ENCODE measurements at regions of chr7 and their contacts with region 1.

Region 1: DNA sequence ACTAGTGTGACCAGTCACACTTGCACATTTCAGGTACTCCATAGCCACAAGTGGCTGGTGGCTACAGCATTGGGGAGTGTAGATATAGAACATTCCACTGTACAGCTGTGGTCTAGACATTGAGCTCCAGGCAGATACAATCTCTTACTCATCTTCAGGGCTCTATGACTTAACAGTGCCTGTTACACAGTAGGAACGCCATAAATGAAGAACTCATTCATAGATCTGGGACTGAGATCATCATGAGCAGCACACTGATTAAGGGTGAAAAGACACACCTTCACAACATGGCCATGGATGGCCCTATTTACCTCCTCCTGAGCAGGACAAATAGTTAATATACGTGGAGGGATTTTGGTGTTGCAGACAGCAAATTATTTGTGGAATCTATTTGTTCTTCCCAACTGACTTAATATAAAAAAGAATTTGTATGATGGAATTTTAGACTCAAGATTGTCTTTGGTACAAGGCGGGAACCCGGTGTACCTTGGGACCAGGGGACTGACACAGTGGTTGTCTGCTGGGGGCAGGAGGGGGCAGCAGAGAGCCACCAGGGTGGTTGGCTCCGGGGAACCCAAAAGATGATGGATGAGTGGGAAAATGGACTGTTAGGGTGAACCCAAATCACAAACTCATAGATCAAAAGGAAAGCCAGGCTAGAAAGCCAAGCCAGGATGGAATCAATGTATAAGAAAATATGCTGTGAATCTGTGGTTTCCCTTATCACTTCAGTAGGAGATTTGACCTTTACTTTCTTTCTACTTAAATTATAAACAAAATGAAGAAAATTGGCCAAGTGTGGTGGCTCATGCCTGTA is 24.3 kb upstream of the CPA2 start:
- DNase-seq: peak; percentile 60
- ATAC-seq: peak; percentile 95
- H3K4me3 ChIP-seq: no peak overlapping the region
- H3K27ac ChIP-seq: no peak overlapping the region
- H3K4me1 ChIP-seq: peaks cover 10% of the 10 kb centered on the region; the same call in 1 of the 2 replicates
- H3K27me3 ChIP-seq: no peaks in the 10 kb centered on the region
- CTCF ChIP-seq: peak; percentile 93

Region 2: DNA sequence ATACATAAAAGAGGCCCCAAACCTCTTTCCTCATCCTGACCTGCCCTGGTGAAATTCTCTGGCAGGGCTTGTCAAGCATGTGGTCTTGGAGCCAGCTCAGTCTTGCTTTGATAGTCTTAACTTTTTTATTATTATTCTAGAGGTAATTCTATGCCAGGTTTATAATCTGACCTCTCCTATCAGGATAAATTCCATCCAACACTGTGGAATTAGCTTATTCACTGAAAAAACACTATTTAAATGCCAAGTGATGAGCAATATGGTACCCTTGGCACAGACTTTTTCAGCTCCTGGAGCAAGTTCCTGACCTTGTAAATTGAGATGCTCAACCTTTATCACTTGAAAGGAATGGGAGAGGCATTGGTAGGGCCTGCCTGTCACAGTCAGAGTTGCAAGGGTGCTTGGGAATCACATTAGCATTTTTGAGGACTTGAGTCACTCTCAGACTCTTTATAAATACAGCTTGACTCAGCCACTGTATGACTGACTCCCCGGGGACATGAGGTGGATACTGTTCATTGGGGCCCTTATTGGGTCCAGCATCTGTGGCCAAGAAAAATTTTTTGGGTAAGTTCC is 50.4 kb after region 1 on chr7 and contains the start of gene CPA4:
- CTCF ChIA-PET with region 1: no interaction called
- POLR2A ChIA-PET with region 1: no interaction called
- intact Hi-C with region 1: loop called (anchors 5 kb)
- DNase-seq: peak; percentile 97
- ATAC-seq: peak; percentile 97
- H3K4me3 ChIP-seq: peak within 1 kb of the TSS; percentile 38
- H3K27ac ChIP-seq: peak within 1 kb of the TSS; percentile 66
- H3K4me1 ChIP-seq: peaks cover 44% of the 10 kb centered on the region
- H3K27me3 ChIP-seq: no peaks in the 10 kb centered on the region
- CTCF ChIP-seq: no peak
- total RNA-seq, gene CPA4: 10.1 and 22.1 TPM in 2 replicates

Region 3: GRCh38 chr7:130421684-130422083 is 179.3 kb after region 1 on chr7:
- CTCF ChIA-PET with region 1: no interaction called
- POLR2A ChIA-PET with region 1: no interaction called
- intact Hi-C with region 1: loop called (anchors 10 kb)
- DNase-seq: no peak
- ATAC-seq: peak; percentile 42
- H3K4me3 ChIP-seq: no peak overlapping the region
- H3K27ac ChIP-seq: peak overlapping the region; percentile 63
- H3K4me1 ChIP-seq: peaks cover 33% of the 10 kb centered on the region
- H3K27me3 ChIP-seq: no peaks in the 10 kb centered on the region
- CTCF ChIP-seq: no peak

Region 4: DNA sequence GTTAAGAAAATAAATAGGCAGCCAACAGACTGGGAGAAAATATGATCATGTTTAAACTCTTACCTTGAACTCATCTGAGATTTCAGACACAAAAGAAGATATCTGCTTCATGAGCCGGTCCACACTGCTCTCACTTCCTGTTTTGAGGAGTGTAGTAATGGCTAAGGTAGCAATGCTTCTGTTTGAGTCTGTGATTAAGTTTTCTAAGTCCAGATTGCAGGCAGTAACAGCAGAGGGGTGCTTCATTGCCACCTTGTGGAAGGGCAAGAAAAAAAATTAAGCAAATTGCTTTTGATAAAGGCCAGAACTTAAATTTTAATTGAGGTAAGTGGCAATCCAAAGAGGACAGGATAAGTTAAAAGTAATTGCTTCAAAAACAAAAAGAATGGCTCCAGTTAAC is 318.6 kb after region 1 on chr7:
- CTCF ChIA-PET with region 1: no interaction called
- POLR2A ChIA-PET with region 1: no interaction called
- intact Hi-C with region 1: loop called (anchors 1 kb)
- DNase-seq: peak; percentile 49
- ATAC-seq: peak; percentile 49; the same call in 1 of the 2 replicates
- H3K4me3 ChIP-seq: no peak overlapping the region
- H3K27ac ChIP-seq: no peak overlapping the region
- H3K4me1 ChIP-seq: no peaks in the 10 kb centered on the region
- H3K27me3 ChIP-seq: no peaks in the 10 kb centered on the region
- CTCF ChIP-seq: peak; percentile 65

Region 5: GRCh38 chr7:130721486-130722280 is 479.3 kb after region 1 on chr7:
- CTCF ChIA-PET with region 1: interaction called, 3 read pairs
- POLR2A ChIA-PET with region 1: no interaction called
- intact Hi-C with region 1: loop called (anchors 10 kb)
- DNase-seq: peak; percentile 69
- ATAC-seq: peak; percentile 99
- H3K4me3 ChIP-seq: no peak overlapping the region
- H3K27ac ChIP-seq: no peak overlapping the region
- H3K4me1 ChIP-seq: no peaks in the 10 kb centered on the region
- H3K27me3 ChIP-seq: peaks cover 17% of the 10 kb centered on the region
- CTCF ChIP-seq: peak; percentile 69

Region 6: DNA sequence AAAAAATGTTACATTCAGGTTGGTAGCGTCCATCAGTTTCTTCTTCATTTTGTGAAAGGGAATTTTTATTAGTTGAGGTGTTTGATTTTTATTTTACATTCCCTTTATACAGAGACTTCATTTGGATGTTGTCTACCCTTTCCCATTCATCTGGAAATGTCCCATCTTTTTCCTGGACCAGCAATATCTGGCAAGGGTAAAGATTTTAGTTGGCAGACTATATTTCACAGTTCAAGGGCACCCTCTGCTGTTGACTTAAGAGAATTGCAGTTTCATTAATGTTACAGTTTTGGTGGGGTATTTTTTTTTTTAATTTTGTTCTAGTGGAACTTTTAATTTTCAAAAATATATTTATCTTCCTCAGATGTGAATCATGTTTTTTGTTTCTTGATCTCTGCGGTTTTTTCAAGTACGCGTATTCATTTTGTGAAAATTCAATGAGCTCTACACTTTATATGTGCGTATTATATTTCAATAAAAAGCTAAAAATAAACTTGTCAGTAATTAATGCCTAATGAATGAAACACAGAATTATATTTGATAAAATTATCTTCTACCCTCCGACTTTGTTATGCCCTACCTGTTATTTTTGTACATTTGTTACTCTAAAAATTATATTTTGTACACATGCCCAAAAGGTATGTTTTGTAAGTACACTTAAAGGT is 589.5 kb after region 1 on chr7:
- CTCF ChIA-PET with region 1: interaction called, 3 read pairs
- POLR2A ChIA-PET with region 1: no interaction called
- intact Hi-C with region 1: loop called (anchors 5 kb)
- DNase-seq: peak; percentile 56
- ATAC-seq: no peak
- H3K4me3 ChIP-seq: no peak overlapping the region
- H3K27ac ChIP-seq: no peak overlapping the region
- H3K4me1 ChIP-seq: peaks cover 7% of the 10 kb centered on the region
- H3K27me3 ChIP-seq: no peaks in the 10 kb centered on the region
- CTCF ChIP-seq: peak; percentile 84